OCI-LY7 (cell line): ENCODE measurements at regions of chr22 and their contacts with region 1.

Region 1: DNA sequence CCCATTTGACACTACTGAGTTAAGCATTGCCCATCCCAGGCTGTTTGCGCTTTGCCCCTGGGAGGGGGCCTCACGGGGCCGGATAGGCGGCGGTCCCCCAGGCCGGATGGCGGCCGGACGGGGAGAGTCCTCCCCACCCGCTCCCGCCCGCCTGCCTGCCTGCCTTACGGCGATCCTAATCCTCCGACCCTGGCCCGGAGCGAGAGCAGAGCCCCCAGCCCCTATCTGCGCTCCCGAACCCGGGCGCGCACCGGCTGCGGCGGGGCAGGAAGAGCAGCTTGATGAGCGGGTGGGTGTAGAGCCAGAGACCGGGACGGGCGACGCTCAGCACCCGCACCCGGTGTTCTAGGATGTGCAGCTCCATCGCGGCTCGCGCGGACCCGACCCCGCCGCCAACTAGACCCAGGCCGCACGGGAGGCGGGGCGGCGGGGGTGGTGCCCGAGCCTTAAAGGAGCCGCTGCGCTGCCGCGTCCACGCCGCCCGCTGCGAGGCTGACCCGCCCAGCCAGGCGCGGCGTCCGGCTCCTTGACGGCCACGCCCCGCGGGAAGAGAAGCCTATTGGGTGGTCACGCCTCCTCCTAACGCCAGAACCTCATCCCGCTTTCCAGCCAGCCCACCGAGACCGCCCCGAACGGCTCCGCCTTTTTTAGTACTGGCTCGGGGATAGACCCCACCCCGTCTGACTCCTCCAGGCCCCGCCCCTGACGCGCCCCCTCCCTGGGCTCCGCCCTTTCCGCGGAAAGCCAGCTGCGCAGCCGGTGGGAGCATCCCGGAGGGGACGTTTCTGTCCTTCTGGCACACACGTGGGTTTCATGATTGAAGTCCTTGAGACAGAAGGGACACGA is at the start of gene CASTOR1:
- DNase-seq: peak; percentile 83
- H3K4me3 ChIP-seq: peak within 1 kb of the TSS; percentile 71
- H3K27ac ChIP-seq: peak within 1 kb of the TSS; percentile 64
- H3K4me1 ChIP-seq: peaks cover 31% of the 10 kb centered on the region
- CTCF ChIP-seq: no peak
- total RNA-seq, gene CASTOR1: 3.5 and 9.1 TPM in 2 replicates

Region 2: GRCh38 chr22:30104501-30105156 is 184.7 kb before region 1 on chr22:
- CTCF ChIA-PET with region 1: no interaction called
- POLR2A ChIA-PET with region 1: no interaction called
- intact Hi-C with region 1: loop called (anchors 1 kb)
- DNase-seq: no peak
- H3K4me3 ChIP-seq: no peak overlapping the region
- H3K27ac ChIP-seq: no peak overlapping the region
- H3K4me1 ChIP-seq: no peaks in the 10 kb centered on the region
- CTCF ChIP-seq: no peak

Region 3: DNA sequence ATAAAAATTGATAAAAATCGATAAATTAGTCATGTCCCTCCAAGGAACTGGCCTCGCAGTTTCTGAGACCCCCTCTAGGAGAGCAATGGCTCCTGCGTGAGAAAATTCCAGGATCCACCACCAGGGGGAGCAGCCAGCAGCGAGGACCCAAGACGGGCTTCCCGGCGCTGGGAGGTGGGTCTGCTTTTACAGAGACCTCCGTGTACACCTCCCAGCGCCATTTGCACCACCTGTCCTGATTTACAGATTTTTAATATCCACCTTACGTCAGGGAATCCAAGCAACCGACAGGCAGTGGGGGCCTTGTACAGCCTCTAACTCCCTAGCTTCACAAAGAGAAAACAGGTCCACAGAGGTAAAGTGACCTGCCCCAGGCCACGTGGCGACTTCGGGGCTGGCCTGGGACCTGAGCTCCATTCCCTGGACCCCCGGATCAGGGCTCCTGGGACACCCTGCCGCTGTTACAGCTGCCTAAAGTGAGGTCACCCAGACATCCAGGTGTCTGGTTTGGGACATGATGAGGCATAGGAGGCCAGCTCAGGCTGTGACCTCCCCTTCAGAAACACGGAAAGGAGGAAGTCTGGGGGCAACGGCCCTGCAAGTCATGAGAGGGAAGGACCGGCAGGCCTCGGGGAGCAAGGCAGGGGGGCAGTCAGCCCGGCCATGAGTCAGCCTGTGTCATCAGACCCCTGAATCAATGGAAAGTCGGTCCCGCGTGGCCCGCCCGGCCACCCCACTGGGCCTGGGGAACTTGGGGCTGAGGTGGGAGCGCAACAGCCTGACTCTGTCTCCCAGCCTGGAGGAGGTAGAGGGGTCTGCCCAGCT is 26.2 kb before region 1 on chr22:
- CTCF ChIA-PET with region 1: interaction called, 5 read pairs
- POLR2A ChIA-PET with region 1: no interaction called
- intact Hi-C with region 1: loop called (anchors 1 kb)
- DNase-seq: peak; percentile 80
- H3K4me3 ChIP-seq: no peak overlapping the region
- H3K27ac ChIP-seq: no peak overlapping the region
- H3K4me1 ChIP-seq: peaks cover 20% of the 10 kb centered on the region
- CTCF ChIP-seq: peak; percentile 96

Region 4: GRCh38 chr22:30326706-30327362 is 37.5 kb after region 1 on chr22 and contains the start of gene TBC1D10A:
- CTCF ChIA-PET with region 1: interaction called, 6 read pairs
- POLR2A ChIA-PET with region 1: interaction called, 3 read pairs
- intact Hi-C with region 1: loop called (anchors 1 kb)
- DNase-seq: peak; percentile 96
- H3K4me3 ChIP-seq: peak within 1 kb of the TSS; percentile 90
- H3K27ac ChIP-seq: peak within 1 kb of the TSS; percentile 33
- H3K4me1 ChIP-seq: peaks cover 33% of the 10 kb centered on the region
- CTCF ChIP-seq: no peak
- total RNA-seq, gene TBC1D10A: 15.1 and 15.9 TPM in 2 replicates

Region 5: GRCh38 chr22:30362651-30363281 is 73.4 kb after region 1 on chr22:
- CTCF ChIA-PET with region 1: no interaction called
- POLR2A ChIA-PET with region 1: no interaction called
- intact Hi-C with region 1: no loop called
- DNase-seq: no peak
- H3K4me3 ChIP-seq: no peak overlapping the region
- H3K27ac ChIP-seq: no peak overlapping the region
- H3K4me1 ChIP-seq: peaks cover 8% of the 10 kb centered on the region
- CTCF ChIP-seq: no peak

Region 6: DNA sequence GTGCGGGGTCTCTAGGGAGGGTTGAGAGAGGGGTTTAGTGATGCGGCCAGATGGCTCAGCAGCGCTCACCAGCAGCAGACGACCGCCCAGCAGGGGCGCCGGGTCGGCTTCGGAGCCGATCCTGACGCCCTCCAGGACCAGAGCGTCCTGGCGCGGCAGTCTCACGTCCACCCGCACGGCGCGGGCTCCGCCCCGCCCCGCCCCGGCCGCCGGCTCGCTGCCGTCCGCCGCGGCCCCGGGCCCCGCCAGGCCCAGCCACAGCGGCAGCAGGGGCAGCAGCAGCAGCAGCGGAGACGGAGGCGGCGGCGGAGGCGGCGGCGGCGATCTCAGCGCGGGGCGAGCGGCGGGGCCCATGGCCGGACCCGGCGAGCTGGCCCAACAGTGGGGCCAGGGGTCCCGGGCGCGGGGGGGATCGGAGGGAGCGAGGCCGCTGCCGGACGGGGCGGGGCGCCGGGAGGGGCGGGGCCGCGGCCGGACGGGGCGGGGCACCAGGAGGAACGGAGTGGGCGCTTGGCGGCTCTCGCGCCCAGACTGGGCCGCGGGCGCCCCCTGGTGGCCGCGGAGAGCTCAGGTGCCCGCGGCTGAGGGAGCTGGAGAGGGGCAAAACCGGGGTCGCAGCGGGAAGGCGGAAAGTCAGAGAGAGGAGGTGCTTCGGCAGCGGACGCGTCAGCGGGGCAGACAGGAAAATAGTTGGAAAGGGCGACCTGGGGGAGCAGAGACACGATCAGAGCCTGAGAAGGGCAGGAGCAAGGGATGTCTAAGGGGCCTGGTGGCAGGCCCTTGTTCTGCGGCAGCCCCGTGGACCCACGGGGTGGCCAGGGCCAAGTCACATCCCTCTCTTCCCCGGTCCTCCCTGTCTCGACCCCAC is 97.8 kb after region 1 on chr22 and contains the start of gene RNF215:
- CTCF ChIA-PET with region 1: interaction called, 11 read pairs
- POLR2A ChIA-PET with region 1: no interaction called
- intact Hi-C with region 1: loop called (anchors 1 kb)
- DNase-seq: peak; percentile 86
- H3K4me3 ChIP-seq: peak within 1 kb of the TSS; percentile 66
- H3K27ac ChIP-seq: no peak within 1 kb of the TSS
- H3K4me1 ChIP-seq: peaks cover 23% of the 10 kb centered on the region
- CTCF ChIP-seq: peak; percentile 82
- total RNA-seq, gene RNF215: 6.9 and 8.0 TPM in 2 replicates

Region 7: DNA sequence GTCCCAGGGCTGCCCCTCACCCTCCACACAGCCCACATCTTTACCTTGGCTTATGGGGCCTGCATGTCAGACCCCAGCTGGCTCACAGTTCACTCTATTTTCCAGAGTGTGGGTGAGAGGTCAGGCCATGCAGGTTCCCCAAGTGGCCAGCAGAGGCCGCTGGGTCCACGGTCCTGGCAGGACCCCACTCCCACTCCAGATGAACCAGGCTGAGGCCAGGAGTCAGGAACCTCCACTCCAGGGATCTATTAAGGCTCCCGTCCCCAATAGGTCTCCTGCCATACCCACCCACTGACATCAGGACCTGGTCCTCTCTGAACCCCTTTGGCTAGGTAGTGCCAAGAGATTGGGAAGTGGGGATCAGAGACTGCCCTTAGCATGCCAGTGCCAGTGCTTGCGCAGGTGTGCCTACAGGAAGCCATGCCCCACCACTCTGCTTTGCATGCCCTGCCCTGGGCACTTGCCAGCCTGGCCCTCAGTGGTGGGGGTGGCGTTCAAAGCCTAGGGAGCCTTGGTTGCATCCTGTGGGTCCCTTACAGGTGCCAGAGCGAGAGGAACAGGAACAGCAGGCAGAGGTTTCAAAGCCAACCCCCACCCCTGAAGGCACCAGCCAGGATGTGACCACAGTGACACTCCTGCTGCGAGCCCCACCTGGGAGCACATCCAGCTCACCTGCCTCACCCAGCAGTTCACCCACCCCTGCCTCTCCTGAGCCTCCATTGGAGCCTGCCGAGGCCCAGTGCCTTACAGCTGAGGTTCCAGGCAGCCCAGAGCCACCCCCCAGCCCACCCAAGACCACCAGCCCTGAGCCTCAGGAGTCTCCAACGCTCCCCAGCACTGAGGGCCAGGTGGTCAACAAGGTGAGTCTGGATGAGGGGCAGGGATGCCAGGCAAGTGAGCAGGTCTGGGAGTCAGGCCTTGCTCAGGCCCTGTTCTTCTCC is 800.1 kb after region 1 on chr22:
- CTCF ChIA-PET with region 1: no interaction called
- POLR2A ChIA-PET with region 1: no interaction called
- intact Hi-C with region 1: no loop called
- DNase-seq: peak; percentile 64
- H3K4me3 ChIP-seq: no peak overlapping the region
- H3K27ac ChIP-seq: no peak overlapping the region
- H3K4me1 ChIP-seq: peaks cover 19% of the 10 kb centered on the region
- CTCF ChIP-seq: peak; percentile 89